ENCODE measurements at regions of chr11 and their contacts with region 1.

Region 1: DNA sequence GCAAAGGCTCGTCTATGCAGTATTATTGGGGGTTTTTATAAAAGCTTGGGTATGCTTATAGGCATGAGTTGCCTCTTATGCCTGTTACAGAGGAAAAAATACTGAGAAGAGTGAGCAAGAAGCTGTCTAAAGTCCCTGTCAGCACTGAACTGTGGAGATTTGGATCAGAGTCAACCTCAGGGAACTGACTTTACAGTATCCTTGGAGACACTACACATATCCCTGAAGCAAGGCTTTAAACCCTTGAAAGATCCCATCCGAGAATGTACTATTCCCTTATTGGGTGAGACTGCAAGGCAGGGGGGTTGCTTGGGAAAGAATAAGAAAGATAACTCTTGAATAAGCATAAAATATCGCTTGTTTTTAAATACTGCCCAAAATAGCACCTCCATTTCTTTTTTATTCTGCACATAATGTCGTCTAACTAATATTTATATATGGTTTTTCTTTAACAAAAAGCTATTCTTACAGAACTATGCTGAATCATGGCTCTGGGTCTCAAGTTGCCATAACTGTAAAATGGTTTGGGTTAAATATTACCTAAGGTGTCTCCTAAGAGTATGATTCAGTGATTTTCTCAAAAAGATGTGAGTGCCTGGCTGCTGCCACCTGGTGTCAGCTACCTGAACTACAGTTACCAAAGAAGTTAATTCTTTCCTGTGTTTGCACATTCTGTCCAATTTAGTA is 1062.8 kb downstream of the DLG2 start:
- DNase-seq: peak in 1 of 2 donors; percentile 25
- H3K4me3 ChIP-seq: no peak overlapping the region
- H3K27ac ChIP-seq: no peak overlapping the region
- H3K4me1 ChIP-seq: no peaks in the 10 kb centered on the region
- H3K27me3 ChIP-seq: no peaks in the 10 kb centered on the region
- CTCF ChIP-seq: peak; percentile 77 to 81

Region 2: GRCh38 chr11:83764643-83765042 is 799.7 kb before region 1 on chr11:
- intact Hi-C with region 1: no loop called
- DNase-seq: no peak
- H3K4me3 ChIP-seq: no peak overlapping the region
- H3K27ac ChIP-seq: no peak overlapping the region
- H3K4me1 ChIP-seq: no peaks in the 10 kb centered on the region
- H3K27me3 ChIP-seq: no peaks in the 10 kb centered on the region
- CTCF ChIP-seq: no peak

Region 3: GRCh38 chr11:84714316-84714780 is 150.0 kb after region 1 on chr11:
- intact Hi-C with region 1: loop called (anchors 10 kb)
- DNase-seq: no peak
- H3K4me3 ChIP-seq: no peak overlapping the region
- H3K27ac ChIP-seq: no peak overlapping the region
- H3K4me1 ChIP-seq: no peaks in the 10 kb centered on the region
- H3K27me3 ChIP-seq: no peaks in the 10 kb centered on the region
- CTCF ChIP-seq: peak in 1 of 2 experiments; percentile 12